Left lung (tissue), 14 donors: ENCODE measurements at regions of chr17 and their contacts with region 1.

Region 1: GRCh38 chr17:27332485-27333409 is 38.8 kb downstream of the WSB1 start:
- DNase-seq: peak; percentile 94 to 100 (median 98)
- ATAC-seq: peak; percentile 97
- H3K4me3 ChIP-seq: peak overlapping the region; percentile 48 to 50
- H3K27ac ChIP-seq: peak overlapping the region; percentile 94 to 96
- H3K4me1 ChIP-seq: peaks cover 13 to 36% of the 10 kb centered on the region in 2 donors
- H3K27me3 ChIP-seq: no peaks in the 10 kb centered on the region
- CTCF ChIP-seq: peak; percentile 72 to 94

Region 2: GRCh38 chr17:27236717-27237315 is 95.9 kb before region 1 on chr17:
- intact Hi-C with region 1: loop called (anchors 5 to 10 kb)
- DNase-seq: peak in 2 of 4 donors; percentile 70 to 84
- ATAC-seq: peak; percentile 88
- H3K4me3 ChIP-seq: no peak overlapping the region
- H3K27ac ChIP-seq: no peak overlapping the region
- H3K4me1 ChIP-seq: peaks cover 4 to 68% of the 10 kb centered on the region in 2 donors
- H3K27me3 ChIP-seq: no peaks in the 10 kb centered on the region
- CTCF ChIP-seq: peak; percentile 94 to 97

Region 3: DNA sequence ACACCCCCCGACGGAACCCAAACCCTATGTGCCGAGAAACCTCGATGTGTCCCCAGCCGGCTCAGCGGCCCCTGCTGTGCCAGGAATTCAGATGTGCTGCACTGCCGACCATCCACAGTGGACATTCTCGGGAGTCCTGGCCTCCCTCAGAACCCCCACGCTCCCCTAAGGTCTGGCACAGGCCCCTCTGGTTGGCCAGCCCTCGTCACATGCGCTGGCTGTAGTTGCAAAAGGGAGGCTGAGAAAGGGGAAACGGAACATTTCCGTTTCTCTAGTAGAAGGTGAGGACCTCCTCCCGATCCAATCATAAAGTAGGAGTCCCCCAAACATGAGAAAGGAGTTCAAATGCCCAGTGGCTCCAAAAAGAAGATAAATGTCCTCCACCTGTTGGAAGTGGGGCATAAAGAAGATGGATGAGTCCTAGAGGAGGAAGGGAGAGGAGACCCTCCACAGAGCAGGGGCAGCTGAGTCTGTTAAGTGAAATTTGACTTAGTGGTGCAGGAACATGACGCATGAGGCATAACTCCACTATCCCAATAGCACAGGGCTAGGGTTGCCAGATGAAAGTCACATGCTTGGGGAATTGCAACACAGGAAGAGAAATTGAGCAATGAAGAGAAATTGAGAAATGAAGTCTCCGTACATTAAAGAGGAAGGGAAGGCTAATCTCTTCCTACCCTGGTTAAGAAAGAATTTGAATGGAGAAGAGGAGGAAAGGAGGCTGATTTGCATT is 88.1 kb before region 1 on chr17:
- intact Hi-C with region 1: loop called (anchors 5 to 10 kb)
- DNase-seq: peak; percentile 77 to 95 (median 93)
- ATAC-seq: peak; percentile 66
- H3K4me3 ChIP-seq: peak overlapping the region in 1 of 2 donors; percentile 11
- H3K27ac ChIP-seq: peak overlapping the region; percentile 89 to 97
- H3K4me1 ChIP-seq: peaks cover 36 to 84% of the 10 kb centered on the region in 2 donors
- H3K27me3 ChIP-seq: no peaks in the 10 kb centered on the region
- CTCF ChIP-seq: no peak

Region 4: DNA sequence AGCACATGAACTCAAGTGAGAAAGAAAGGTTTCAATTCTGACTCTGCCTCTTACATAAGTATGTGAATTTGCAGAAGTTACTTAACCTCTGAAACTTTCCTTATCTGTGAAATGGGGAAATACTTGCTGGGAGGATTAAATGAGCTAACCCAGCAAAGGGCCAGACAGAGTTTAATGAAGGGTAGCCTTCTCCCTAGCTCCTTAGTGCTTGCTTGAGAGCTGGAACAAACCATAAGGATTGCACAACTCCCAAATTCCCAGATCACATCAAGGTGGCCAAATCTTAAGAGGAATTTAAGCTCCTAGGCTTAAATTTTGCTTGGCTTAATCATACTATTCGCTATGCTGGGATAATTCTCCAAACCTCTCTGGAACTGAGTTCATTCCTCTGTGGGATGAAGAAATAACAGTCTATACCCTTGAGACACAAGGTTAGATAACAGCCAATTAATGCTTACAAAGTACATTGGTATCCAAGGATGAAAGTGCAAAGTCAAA is 50.6 kb before region 1 on chr17:
- intact Hi-C with region 1: no loop called
- DNase-seq: no peak
- ATAC-seq: peak; percentile 79
- H3K4me3 ChIP-seq: no peak overlapping the region
- H3K27ac ChIP-seq: peak overlapping the region; percentile 10 to 78
- H3K4me1 ChIP-seq: peaks cover 0 to 75% of the 10 kb centered on the region in 2 donors
- H3K27me3 ChIP-seq: no peaks in the 10 kb centered on the region
- CTCF ChIP-seq: no peak

Region 5: DNA sequence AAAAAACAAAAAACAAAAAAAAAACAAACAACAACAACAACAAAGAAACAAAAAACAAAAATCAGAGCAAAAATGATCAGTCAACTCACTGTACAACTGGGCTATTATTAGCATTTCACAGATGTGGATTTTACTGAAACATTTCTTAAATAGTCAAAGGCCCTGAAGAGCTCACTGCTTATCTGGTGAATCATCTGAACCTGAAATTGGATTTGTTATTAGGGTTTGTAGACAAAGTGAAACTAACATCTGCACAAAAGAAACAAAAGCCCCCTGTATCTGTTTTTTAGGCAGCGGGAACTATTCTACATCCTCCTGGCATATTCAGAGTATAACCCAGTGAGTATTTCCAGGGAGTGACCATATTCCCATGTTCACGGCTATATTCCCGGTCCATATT is 90.9 kb after region 1 on chr17:
- intact Hi-C with region 1: no loop called
- DNase-seq: no peak
- ATAC-seq: no peak
- H3K4me3 ChIP-seq: no peak overlapping the region
- H3K27ac ChIP-seq: no peak overlapping the region
- H3K4me1 ChIP-seq: no peaks in the 10 kb centered on the region
- H3K27me3 ChIP-seq: no peaks in the 10 kb centered on the region
- CTCF ChIP-seq: no peak